ENCODE measurements at regions of chr12 and their contacts with region 1.

Region 1: DNA sequence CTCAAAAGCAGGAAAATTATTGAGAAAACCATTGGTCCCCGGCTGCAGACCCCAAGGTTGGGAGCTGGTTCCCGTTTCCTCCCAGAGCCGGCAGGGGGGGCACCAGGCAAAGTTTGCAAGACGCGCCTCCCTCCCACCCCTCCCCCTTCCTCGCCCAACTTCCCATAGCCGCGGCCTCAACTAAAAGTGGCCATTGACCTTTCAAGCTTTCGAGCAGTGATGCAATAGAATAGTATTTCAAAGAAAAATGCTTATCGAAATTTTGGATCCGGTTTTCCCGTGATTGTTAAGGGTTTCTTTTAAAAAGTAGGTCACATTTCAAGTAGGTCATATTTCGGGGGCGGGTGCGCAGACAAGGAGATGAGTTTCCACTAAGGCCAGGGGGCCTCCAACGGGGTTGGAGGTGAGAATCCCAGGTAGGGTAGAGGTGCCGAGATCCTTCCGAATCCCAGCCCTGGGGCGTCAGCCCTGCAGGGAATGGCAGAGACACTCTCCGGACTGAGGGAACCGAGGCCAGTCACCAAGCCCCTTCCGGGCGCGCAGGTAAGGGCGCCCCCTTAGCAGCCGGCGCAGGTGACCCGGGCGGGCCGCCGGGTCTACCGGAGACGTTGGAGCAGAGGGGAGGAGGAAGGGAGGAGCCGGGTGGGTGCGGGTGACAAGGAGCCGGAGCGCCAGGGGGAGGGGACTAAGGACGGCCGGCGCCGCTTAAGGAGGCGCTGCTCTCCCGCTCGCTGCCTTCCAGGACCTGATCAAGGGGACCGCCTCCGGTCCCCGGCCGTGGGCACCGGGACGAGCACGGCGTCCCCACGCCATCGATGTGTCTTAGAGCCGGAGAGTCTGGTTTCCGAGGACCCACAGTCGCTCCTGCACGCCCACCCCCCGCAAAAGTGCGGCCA is 2.6 kb upstream of the SOCS2 start:
- DNase-seq: peak; percentile 86 to 92
- H3K4me3 ChIP-seq: peak overlapping the region; percentile 71 to 95
- H3K27ac ChIP-seq: peak overlapping the region; percentile 98 to 100
- H3K4me1 ChIP-seq: no peaks in the 10 kb centered on the region
- H3K27me3 ChIP-seq: no peaks in the 10 kb centered on the region
- CTCF ChIP-seq: peak; percentile 67 to 93 (median 84)
- POLR2A ChIP-seq: peak in 1 of 2 donors; percentile 17

Region 2: GRCh38 chr12:93507165-93507564 is 62.7 kb before region 1 on chr12:
- intact Hi-C with region 1: no loop called
- DNase-seq: no peak
- H3K4me3 ChIP-seq: no peak overlapping the region
- H3K27ac ChIP-seq: no peak overlapping the region
- H3K4me1 ChIP-seq: no peaks in the 10 kb centered on the region
- H3K27me3 ChIP-seq: no peaks in the 10 kb centered on the region
- CTCF ChIP-seq: no peak
- POLR2A ChIP-seq: no peak

Region 3: DNA sequence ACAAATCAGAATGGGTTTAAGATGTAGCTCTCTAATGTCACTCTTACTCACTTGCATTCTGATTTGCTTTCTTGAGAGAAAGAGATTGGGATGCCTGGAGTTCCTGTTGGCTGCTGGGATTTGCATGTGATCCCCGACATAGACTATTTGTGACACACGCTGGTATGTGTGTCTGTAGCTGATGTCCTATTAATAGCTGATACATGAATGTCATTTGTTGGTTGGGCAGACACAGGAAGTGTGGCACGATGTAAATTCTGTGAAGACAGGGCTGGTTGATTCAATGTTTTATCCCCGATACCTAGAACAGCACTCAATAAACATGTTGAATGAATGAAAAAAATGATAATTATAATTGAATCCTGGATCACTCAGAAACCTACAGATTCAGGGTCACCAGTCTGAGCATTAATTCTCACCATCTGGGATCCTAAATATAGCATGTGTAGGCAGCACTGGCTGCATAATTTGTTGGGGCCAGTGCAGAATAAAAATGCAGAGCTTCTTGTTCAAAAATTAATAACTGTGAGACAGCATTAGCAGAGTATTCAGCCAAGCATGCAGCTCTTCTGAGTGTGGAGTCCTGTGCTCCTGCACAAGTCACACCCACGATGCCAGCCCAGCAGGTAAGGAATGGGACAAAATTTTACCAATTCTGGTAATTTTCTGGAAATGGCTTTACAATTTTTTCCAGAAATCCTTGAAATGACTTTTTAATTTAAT is 33.0 kb before region 1 on chr12:
- intact Hi-C with region 1: no loop called
- DNase-seq: no peak
- H3K4me3 ChIP-seq: no peak overlapping the region
- H3K27ac ChIP-seq: no peak overlapping the region
- H3K4me1 ChIP-seq: no peaks in the 10 kb centered on the region
- H3K27me3 ChIP-seq: no peaks in the 10 kb centered on the region
- CTCF ChIP-seq: no peak
- POLR2A ChIP-seq: no peak

Region 4: GRCh38 chr12:93591137-93591868 is 21.4 kb after region 1 on chr12:
- intact Hi-C with region 1: loop called (anchors 2 kb)
- DNase-seq: peak; percentile 78 to 86
- H3K4me3 ChIP-seq: peak overlapping the region; percentile 49 to 50
- H3K27ac ChIP-seq: peak overlapping the region; percentile 92 to 98
- H3K4me1 ChIP-seq: no peaks in the 10 kb centered on the region
- H3K27me3 ChIP-seq: no peaks in the 10 kb centered on the region
- CTCF ChIP-seq: no peak
- POLR2A ChIP-seq: peak; percentile 69 to 80

Region 5: DNA sequence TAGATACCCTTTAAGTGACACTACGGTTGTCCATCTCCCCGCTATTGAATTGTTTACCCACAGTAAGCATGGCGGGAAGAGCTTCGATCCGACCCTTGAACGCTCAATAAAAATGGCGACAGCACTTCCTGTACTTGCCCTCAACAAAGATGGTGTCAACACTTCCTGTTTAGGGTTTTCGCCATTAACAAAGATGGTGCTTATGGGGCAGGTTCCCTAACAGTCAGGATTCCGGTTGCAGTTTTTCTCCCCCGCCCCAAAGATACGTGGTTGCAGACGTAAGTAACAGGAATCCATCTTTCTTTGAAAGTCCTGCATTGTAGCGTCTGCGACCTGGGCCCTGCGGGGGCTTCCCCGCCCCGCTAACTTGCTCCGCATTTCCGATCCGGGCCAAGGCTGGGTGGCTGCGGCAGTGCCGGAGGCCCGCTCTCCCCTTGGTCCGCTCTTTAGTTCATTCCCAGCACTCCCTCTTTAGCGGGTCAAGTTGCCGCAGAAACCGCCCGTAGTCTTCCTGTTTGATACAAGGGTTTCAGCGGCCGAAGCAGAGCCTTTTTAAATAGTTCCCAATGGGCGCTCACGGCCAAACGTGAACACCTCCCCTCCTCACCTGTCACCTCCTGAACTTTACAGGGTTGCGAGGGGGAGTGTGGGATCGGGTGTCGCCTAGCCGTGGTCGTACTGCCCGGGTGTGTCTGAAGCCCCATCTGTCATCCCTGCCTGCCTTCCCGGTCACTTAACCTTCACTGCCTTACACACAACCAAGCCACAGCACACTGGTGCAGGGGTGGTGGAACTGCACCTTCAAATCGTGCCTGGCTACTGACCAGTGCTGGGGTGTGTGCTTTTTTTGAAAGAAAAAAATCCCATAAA is 107.5 kb after region 1 on chr12 and contains the start of gene CRADD:
- intact Hi-C with region 1: loop called (anchors 5 kb)
- DNase-seq: peak; percentile 78 to 93
- H3K4me3 ChIP-seq: peak within 1 kb of the TSS; percentile 68 to 76
- H3K27ac ChIP-seq: peak within 1 kb of the TSS; percentile 98 to 99
- H3K4me1 ChIP-seq: peaks cover 0 to 9% of the 10 kb centered on the region in 2 donors
- H3K27me3 ChIP-seq: no peaks in the 10 kb centered on the region
- CTCF ChIP-seq: peak in 1 of 4 experiments; percentile 17
- POLR2A ChIP-seq: peak; percentile 76
- total RNA-seq, gene CRADD: 26.4 to 105 (median 49.2) TPM

Region 6: DNA sequence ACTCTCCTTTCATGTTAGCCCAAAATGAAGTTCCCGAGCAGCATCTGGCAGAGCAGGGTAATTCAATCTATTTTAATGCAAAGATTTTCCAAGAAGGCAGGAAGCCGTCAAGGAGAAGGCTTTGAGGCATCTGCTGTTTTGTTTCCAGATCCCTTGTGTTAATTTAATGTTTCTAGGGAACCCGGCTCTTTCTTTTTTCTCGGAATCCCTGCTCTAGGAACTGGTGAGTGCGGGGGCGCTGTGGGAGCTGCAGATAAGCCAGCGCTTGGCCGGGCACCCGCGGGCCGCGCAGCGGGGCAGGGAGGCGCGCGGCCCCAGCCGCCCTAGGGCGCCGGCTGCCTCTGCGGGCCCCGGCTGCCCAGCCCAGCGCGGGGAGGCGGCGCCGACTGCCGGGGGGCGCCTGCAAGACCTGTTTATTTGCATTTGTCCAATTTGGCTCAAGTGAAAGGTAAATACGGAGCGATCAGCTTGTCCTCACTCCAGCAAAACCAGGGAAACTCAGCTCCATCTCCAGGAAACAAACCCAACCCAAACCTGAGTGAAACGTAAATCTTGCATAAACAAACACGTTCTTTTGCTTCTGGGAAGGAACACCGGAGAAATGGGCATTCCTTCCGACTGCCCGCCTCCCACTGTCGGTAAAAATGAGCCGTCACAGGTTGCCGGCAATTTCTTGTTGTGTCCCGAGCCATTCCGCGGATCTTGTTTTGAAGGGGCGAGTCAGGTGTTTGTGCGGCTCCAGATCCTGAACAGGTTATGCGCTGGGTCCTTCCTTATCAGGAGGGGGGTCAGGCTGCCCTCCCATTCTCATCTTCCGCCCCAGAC is 172.4 kb after region 1 on chr12:
- intact Hi-C with region 1: loop called (anchors 5 kb)
- DNase-seq: peak; percentile 82 to 87
- H3K4me3 ChIP-seq: peak overlapping the region; percentile 44 to 57
- H3K27ac ChIP-seq: peak overlapping the region; percentile 93 to 99
- H3K4me1 ChIP-seq: no peaks in the 10 kb centered on the region
- H3K27me3 ChIP-seq: no peaks in the 10 kb centered on the region
- CTCF ChIP-seq: peak; percentile 24 to 71 (median 56)
- POLR2A ChIP-seq: peak; percentile 11 to 48

Region 7: GRCh38 chr12:94101738-94102660 is 532.1 kb after region 1 on chr12:
- intact Hi-C with region 1: loop called (anchors 2 kb)
- DNase-seq: peak; percentile 86 to 87
- H3K4me3 ChIP-seq: peak overlapping the region; percentile 39 to 46
- H3K27ac ChIP-seq: peak overlapping the region; percentile 56
- H3K4me1 ChIP-seq: no peaks in the 10 kb centered on the region
- H3K27me3 ChIP-seq: no peaks in the 10 kb centered on the region
- CTCF ChIP-seq: peak; percentile 78 to 89 (median 86)
- POLR2A ChIP-seq: no peak